ENCODE measurements at regions of chr16 and their contacts with region 1.

Region 1: GRCh38 chr16:56401482-56401881 is 23.9 kb downstream of the AMFR start:
- DNase-seq: peak; percentile 48 to 55
- ATAC-seq: peak; percentile 96
- H3K4me3 ChIP-seq: no peak overlapping the region
- H3K27ac ChIP-seq: no peak overlapping the region
- H3K4me1 ChIP-seq: peaks cover 4% of the 10 kb centered on the region; the same call in 2 of the 3 replicates
- CTCF ChIP-seq: no peak
- EP300 ChIP-seq: no peak
- POLR2A ChIP-seq: no peak
- RAD21 ChIP-seq: no peak

Region 2: GRCh38 chr16:56382901-56383355 is 18.6 kb before region 1 on chr16:
- CTCF ChIA-PET with region 1: interaction called, 10 read pairs
- POLR2A ChIA-PET with region 1: no interaction called
- DNase-seq: peak; percentile 34 to 65
- ATAC-seq: peak; percentile 89 to 90
- H3K4me3 ChIP-seq: no peak overlapping the region
- H3K27ac ChIP-seq: peak overlapping the region in 1 of 2 experiments; percentile 24; a peak in 4 of 6 replicates
- H3K4me1 ChIP-seq: peaks cover 15% of the 10 kb centered on the region
- CTCF ChIP-seq: no peak
- EP300 ChIP-seq: no peak
- POLR2A ChIP-seq: no peak
- RAD21 ChIP-seq: no peak